Lower leg skin (tissue), 4 donors: ENCODE measurements at regions of chr22 and their contacts with region 1.

Region 1: DNA sequence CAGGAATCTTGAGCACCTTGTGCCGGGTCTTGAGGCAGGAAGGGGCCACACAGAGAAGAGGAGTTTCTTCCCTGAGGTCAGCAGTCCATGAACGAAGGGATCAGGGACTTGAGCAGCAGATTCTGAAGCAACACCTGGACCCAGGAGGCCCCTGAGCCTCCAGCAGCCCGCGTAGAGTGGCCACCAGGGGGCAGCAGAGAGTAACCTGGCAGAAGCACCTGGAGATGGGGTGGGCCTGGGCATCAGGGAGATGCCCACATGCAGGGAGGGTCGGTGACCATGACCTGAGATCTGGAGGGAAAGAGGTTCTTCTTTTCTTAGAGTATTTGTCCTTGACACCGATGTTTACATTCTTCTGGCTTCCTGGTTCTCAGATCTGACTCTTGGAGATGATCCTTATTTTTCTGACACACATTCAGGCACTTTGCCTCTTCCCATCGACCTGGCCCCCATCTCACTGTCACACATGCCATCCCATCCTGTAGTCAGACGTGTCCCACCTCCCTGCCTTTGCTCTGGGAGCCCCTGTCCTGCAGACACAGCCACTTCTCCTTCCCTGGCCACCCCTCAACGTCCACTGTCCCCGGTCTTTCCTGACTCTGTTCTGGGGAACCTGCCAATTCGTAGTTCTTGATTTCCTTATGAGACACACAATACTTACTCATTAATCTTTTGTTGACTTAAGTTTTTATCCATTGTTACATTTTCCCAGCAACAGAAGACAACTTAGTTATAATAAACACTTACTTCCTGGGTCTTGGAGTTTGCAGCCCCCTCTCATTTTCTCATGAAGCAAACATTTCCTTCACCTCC is 66.5 kb downstream of the GGTLC2 start:
- DNase-seq: peak; percentile 15 to 93
- H3K4me3 ChIP-seq: no peak overlapping the region
- CTCF ChIP-seq: peak in 1 of 3 donors; percentile 13
- POLR2A ChIP-seq: no peak

Region 2: DNA sequence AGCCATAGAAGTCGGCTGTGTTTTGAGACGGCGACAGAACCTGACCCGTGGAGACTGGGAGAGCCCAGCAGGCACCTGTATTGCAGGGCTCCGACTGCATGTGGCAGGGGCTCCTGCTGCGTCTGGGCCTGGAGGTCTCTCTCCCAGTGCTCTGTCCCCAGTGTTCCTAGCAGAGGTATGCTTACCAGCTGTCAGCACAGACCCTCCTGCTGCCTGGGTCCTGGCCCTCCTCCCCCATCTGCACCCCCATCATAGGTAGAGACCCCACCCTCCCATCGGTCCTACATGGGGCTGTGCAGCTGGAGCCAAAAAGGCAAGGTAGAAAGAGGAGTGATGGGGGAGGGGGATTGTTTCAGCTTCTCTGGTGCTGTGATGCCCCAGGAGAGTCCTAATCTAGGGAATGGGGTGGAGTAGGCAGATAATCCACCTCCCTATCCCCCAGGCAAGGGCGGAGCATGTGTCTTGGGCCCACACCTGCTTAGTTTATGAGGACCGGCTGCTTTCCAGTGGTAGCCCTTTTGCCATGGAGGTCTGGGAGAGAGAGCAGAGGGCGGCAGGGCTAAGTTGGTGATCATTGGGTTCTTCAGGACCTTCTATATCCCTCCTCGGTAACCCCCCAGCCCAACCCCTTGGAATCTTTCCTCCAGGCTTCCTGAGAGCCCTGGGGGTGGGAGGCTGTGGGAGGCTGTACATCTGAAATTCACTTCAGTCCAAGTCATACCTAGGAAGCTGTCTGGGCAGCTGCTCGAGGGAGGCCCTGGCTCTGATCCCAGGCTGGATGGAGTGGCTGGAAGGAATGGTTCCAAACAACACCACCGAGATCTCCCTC is 1683.9 kb before region 1 on chr22:
- intact Hi-C with region 1: loop called (anchors 5 kb)
- DNase-seq: no peak
- H3K4me3 ChIP-seq: no peak overlapping the region
- CTCF ChIP-seq: no peak
- POLR2A ChIP-seq: no peak

Region 3: DNA sequence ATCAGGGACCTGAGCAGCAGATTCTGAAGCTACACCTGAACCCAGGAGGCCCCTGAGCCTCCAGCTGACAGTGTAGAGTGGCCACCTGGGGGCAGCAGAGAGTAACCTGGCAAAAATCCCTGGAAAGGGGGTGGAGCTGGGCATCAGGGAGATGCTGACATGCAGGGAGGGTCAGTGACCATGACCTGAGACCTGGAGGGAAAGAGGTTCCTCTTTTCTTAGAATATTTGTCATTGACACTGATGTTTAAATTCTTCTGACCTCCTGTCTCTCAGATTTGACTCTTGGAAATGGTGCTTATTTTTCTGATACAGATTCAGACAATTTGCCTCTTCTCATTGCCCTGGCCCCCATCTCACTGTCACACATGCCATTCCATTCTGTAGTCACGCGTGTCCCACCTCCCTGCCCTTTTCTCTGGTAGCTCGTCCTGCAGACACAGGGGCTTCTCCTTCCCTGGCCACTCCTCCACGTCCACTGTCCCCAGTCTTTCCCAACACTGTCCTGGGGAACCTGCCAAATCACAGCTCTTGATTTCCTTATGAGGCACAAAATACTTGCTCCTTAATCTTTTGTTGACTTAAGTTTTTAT is 59.5 kb after region 1 on chr22:
- intact Hi-C with region 1: no loop called
- DNase-seq: peak in 1 of 2 donors; percentile 85
- H3K4me3 ChIP-seq: no peak overlapping the region
- CTCF ChIP-seq: no peak
- POLR2A ChIP-seq: no peak